Calu3 (cell line): ENCODE measurements at regions of chr1 and their contacts with region 1.

Region 1: GRCh38 chr1:226626577-226626956 is 78.0 kb downstream of the STUM start:
- DNase-seq: peak; percentile 84
- H3K4me3 Mint-ChIP-seq: no peak overlapping the region
- H3K27ac Mint-ChIP-seq: no peak overlapping the region
- H3K4me1 Mint-ChIP-seq: no peaks in the 10 kb centered on the region
- H3K27me3 Mint-ChIP-seq: peaks cover 40% of the 10 kb centered on the region
- CTCF ChIP-seq: peak; percentile 98

Region 2: DNA sequence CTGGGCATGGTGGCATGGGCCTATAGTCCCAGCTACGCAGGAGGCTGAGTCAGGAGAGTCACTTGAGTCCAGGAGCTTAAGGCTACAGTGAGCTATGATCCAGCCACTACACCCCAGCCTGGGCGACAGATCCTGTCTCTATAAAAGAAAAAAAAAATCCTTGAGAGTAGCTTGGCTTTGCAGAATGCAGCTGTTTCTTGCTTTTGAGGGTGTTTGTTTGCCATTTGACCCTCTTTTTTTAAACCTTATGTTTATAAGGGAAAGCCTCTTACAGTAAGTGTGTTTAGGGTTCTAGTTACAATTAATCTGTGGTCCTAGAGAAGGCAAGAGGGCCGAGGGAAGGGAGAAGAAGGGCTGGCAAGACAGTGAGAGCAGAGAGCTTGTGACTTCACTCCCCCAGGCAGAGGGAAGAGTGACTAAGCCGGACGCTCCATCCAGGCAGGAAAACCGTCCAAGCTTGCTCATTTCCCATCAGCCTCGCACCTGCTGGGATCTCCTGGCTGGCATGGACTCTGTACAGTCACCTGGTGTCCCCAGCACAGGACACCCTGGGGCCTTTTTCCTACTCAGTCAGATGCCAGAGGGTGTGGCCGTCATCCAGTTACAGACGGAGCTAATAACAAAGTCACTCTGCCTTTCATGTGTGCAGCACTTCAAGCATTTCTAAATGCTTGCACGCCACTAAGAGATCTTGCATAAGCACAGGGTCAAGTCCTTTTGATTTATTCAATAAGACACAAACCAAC is 188.4 kb after region 1 on chr1:
- CTCF ChIA-PET with region 1: interaction called, 10 read pairs
- intact Hi-C with region 1: no loop called
- DNase-seq: peak; percentile 87
- H3K4me3 Mint-ChIP-seq: no peak overlapping the region
- H3K27ac Mint-ChIP-seq: peak overlapping the region; percentile 45
- H3K4me1 Mint-ChIP-seq: peaks cover 14% of the 10 kb centered on the region
- H3K27me3 Mint-ChIP-seq: no peaks in the 10 kb centered on the region
- CTCF ChIP-seq: no peak

Region 3: DNA sequence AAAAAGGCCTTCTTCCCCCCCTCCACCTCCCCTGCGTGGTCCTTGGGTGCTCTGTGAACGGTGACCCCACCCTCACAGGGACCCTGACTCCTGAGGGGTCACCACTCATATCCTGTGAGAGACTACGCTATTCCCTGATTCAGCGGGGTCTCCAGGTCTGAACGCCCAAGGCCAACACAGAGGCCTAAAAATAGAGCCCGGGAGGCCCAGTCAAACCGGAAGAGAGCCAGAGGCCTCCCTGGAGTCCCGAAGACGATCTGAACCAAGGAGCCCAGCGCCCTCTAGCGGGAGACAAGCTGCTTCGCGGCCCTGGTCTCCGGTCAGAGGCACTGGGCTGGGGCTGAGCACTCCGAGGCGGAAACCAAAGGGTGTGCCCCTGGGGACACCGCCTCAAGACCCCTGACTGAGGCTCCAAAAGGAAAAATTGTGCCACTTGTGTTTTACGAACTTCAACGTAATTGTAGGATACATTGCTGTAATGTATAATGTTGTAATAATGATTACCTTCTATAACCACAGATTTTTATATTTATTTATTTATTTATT is 201.5 kb after region 1 on chr1:
- CTCF ChIA-PET with region 1: interaction called, 3 read pairs
- intact Hi-C with region 1: loop called (anchors 2 kb)
- DNase-seq: peak; percentile 98
- H3K4me3 Mint-ChIP-seq: no peak overlapping the region
- H3K27ac Mint-ChIP-seq: no peak overlapping the region
- H3K4me1 Mint-ChIP-seq: no peaks in the 10 kb centered on the region
- H3K27me3 Mint-ChIP-seq: peaks cover 37% of the 10 kb centered on the region
- CTCF ChIP-seq: peak; percentile 90